Naive thymus-derived CD4-positive, alpha-beta T cell (primary cell): ENCODE measurements at regions of chr7 and their contacts with region 1.

Region 1: DNA sequence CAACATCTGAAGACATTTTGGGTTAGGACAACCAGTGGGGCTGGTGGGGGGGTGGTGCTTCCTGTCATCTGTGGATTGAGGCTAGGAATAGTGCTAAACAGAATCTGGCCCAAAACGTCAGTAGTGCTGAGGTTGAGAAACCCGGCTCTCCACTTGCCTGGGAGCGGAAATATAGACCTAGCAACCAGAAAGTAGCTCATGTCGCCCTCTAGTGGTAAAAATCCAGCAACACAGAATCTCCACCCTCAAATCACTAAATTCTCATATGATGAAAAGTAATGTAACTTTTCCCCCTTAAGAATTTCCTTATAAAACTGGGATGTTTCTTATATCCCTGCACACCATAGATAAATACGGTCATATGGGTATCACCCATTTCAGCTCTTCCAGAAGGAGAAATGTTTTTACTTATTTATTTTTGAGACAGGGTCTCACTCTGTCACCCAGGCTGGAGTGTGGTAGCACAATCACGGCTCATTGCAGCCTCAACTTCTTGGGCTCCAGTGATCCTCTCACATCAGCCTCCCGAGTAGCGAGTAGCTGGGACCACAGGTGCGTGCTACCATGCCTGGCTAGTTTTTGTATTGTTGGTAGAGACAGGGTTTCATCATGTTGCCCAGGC is 34.4 kb downstream of the ZC3HAV1 start:
- DNase-seq: peak; percentile 20 to 82 (median 76)
- ATAC-seq: peak; percentile 91
- H3K4me3 ChIP-seq: no peak overlapping the region
- H3K4me3 Mint-ChIP-seq: peak overlapping the region in 9 of 10 donors; percentile 45 to 77 (median 65)
- H3K27ac ChIP-seq: peak overlapping the region; percentile 64
- H3K27ac Mint-ChIP-seq: peak overlapping the region; percentile 73 to 92 (median 84)
- H3K4me1 ChIP-seq: peaks cover 16 to 55% of the 10 kb centered on the region in 2 donors
- H3K4me1 Mint-ChIP-seq: peaks cover 37 to 81% (median 73%) of the 10 kb centered on the region in 7 donors
- H3K27me3 ChIP-seq: no peaks in the 10 kb centered on the region
- H3K27me3 Mint-ChIP-seq: no peaks in the 10 kb centered on the region

Region 2: DNA sequence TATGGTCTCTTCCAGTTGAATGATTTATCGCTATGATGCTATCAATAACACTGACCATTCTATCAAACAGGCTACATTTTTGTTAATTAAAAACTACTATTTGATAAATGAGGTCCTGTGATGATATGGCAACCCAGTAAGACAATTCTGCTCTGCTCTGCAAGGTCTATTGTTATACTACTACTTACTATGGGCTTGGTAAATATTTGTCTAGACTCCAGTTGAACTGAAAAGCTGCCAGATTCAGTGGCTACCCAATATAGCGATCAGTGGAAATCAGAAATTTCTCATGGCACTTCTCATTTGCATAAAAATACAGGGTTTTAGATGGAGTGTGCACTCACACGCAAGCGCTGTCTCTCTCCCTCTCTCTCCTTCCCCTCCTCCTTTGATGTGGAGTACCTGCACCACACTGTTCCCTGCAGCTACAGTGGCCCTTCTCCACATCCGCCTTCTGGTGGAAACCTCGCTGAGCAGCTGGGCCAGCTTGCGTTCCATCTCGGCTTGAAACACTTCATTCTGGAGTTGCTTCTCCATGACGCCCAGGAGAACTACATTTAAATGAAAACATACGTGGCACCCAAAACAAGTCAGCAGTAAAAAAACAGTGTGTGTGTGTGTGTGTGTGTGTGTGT is 171.8 kb before region 1 on chr7:
- CTCF ChIA-PET with region 1: no interaction called
- POLR2A ChIA-PET with region 1: interaction called, 6 read pairs
- intact Hi-C with region 1: loop called in 1 of 2 experiments (anchors 1 kb)
- DNase-seq: peak; percentile 29 to 94 (median 90)
- ATAC-seq: peak; percentile 98
- H3K4me3 ChIP-seq: peak overlapping the region; percentile 38
- H3K4me3 Mint-ChIP-seq: peak overlapping the region; percentile 69 to 94 (median 82)
- H3K27ac ChIP-seq: no peak overlapping the region
- H3K27ac Mint-ChIP-seq: peak overlapping the region; percentile 17 to 97 (median 87)
- H3K4me1 ChIP-seq: peaks cover 20 to 36% of the 10 kb centered on the region in 2 donors
- H3K4me1 Mint-ChIP-seq: peaks cover 25 to 66% (median 56%) of the 10 kb centered on the region in 7 donors
- H3K27me3 ChIP-seq: no peaks in the 10 kb centered on the region
- H3K27me3 Mint-ChIP-seq: peaks cover 0 to 59% (median 5%) of the 10 kb centered on the region in 5 donors

Region 3: DNA sequence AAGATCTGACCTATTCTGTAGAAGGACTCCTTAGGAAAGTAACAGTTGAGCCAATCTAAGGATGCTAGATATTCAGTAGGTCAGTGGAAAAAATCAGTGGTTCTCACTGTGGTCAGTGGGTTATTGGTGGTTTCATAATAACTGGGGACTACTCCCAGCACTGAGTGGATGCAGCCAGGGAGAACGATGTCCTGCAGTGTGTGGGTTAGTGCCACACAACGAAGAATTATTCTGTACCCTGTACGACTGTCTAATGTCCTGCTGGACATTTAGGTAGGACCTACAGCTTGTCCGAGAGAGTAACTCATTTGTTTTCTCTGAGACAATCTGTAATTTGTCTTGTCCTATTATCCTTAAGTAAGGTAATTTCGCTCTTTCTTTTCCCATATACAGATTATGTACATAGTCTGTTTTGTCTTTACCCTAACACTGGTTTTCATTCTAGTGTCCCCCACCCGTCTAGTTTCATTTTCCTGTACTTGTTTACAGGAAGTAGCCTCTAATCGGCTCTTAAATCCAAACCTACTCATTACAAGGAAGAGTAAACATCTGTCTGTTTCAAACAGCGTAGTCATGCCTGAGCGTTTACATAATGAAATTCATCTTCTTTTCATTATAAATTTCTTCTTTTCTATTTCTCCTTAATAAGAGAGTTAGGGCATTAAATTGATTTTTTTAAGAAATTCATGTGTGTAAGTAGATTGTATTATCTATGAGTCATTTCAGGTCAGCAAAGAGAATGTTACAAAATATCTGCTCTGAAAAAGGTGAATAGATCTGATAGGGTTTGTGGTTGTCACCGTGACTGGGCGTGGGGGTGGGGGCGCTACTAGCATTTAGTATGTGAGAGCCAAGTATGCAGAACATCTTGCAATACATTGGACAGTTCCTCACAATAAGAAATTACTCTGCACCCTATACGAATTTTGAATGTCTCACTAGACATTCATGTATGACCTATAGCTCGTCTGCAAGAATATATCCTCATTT is 31.0 kb before region 1 on chr7:
- CTCF ChIA-PET with region 1: no interaction called
- POLR2A ChIA-PET with region 1: interaction called, 8 read pairs
- intact Hi-C with region 1: loop called (anchors 1 to 2 kb)
- DNase-seq: peak in 5 of 9 donors; percentile 36 to 71 (median 40)
- ATAC-seq: peak; percentile 81
- H3K4me3 ChIP-seq: no peak overlapping the region
- H3K4me3 Mint-ChIP-seq: peak overlapping the region in 9 of 10 donors; percentile 4 to 87 (median 58)
- H3K27ac ChIP-seq: peak overlapping the region; percentile 50
- H3K27ac Mint-ChIP-seq: peak overlapping the region; percentile 48 to 89 (median 79)
- H3K4me1 ChIP-seq: peaks cover 36 to 38% of the 10 kb centered on the region in 2 donors
- H3K4me1 Mint-ChIP-seq: peaks cover 35 to 77% (median 67%) of the 10 kb centered on the region in 7 donors
- H3K27me3 ChIP-seq: no peaks in the 10 kb centered on the region
- H3K27me3 Mint-ChIP-seq: no peaks in the 10 kb centered on the region

Region 4: GRCh38 chr7:139058943-139059342 is 16.2 kb before region 1 on chr7:
- CTCF ChIA-PET with region 1: interaction called, 4 read pairs
- POLR2A ChIA-PET with region 1: interaction called, 8 read pairs
- intact Hi-C with region 1: loop called (anchors 1 to 2 kb)
- DNase-seq: no peak
- ATAC-seq: no peak
- H3K4me3 ChIP-seq: no peak overlapping the region
- H3K4me3 Mint-ChIP-seq: peak overlapping the region in 1 of 10 donors; percentile 16
- H3K27ac ChIP-seq: peak overlapping the region; percentile 22
- H3K27ac Mint-ChIP-seq: peak overlapping the region in 8 of 9 donors; percentile 38 to 91 (median 79)
- H3K4me1 ChIP-seq: peaks cover 0 to 16% of the 10 kb centered on the region in 2 donors
- H3K4me1 Mint-ChIP-seq: peaks cover 28 to 63% (median 49%) of the 10 kb centered on the region in 7 donors
- H3K27me3 ChIP-seq: no peaks in the 10 kb centered on the region
- H3K27me3 Mint-ChIP-seq: no peaks in the 10 kb centered on the region

Region 5: GRCh38 chr7:139095194-139095659 is 20.1 kb after region 1 on chr7:
- CTCF ChIA-PET with region 1: interaction called, 16 read pairs
- POLR2A ChIA-PET with region 1: interaction called, 40 read pairs
- intact Hi-C with region 1: loop called (anchors 1 to 2 kb)
- DNase-seq: peak; percentile 45 to 95 (median 93)
- ATAC-seq: peak; percentile 96
- H3K4me3 ChIP-seq: peak overlapping the region; percentile 84
- H3K4me3 Mint-ChIP-seq: peak overlapping the region; percentile 81 to 98 (median 88)
- H3K27ac ChIP-seq: peak overlapping the region; percentile 75
- H3K27ac Mint-ChIP-seq: peak overlapping the region; percentile 89 to 97 (median 94)
- H3K4me1 ChIP-seq: peaks cover 53 to 75% of the 10 kb centered on the region in 2 donors
- H3K4me1 Mint-ChIP-seq: peaks cover 60 to 100% (median 87%) of the 10 kb centered on the region in 7 donors
- H3K27me3 ChIP-seq: no peaks in the 10 kb centered on the region
- H3K27me3 Mint-ChIP-seq: peaks cover 0 to 3% (median 0%) of the 10 kb centered on the region in 5 donors

Region 6: DNA sequence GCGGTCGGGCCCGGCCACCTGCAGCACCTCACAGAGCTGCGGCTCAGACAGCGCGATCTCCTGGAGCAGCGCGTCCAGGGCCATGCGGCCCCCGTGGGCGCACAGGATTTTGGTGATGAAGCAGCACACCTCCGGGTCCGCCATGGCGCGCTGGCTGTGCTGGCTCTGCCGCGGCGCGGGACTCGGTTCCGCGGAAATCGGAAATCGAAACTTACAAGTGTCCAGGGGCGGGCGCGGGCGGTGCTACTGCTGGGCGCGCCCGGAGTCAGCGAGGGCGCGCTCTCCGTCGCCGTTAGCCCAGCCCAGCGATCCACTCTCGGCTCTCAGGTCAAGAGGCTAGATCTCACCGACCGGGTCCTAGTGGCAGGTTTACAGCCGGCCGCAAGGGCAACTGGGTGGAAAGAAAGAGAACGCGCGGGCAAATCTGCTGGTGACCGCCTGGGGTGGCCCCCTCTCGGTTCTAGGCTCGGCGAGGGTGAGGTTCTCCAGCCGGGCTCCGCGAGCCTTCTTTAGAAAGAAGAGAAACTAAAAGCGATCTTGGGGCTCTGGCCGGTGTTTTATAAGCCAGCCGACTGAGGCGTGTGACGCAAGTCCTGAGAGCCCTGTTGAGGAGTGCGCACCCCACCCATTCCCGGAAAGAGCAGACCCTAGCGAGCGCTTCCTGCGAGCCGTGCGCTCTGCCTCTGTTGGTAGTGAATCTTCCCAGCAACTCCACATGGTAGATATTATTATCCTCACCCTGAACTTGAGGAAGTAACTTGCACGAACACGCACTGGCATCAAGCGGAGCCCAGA is 34.2 kb after region 1 on chr7 and contains the start of gene ZC3HAV1:
- CTCF ChIA-PET with region 1: interaction called, 8 read pairs
- POLR2A ChIA-PET with region 1: interaction called, 40 read pairs
- intact Hi-C with region 1: loop called (anchors 1 kb)
- DNase-seq: peak; percentile 68 to 94 (median 90)
- ATAC-seq: peak; percentile 91
- H3K4me3 ChIP-seq: peak within 1 kb of the TSS; percentile 80
- H3K4me3 Mint-ChIP-seq: peak within 1 kb of the TSS; percentile 92 to 100 (median 98)
- H3K27ac ChIP-seq: peak within 1 kb of the TSS; percentile 93
- H3K27ac Mint-ChIP-seq: peak within 1 kb of the TSS; percentile 96 to 100 (median 98)
- H3K4me1 ChIP-seq: peaks cover 13 to 22% of the 10 kb centered on the region in 2 donors
- H3K4me1 Mint-ChIP-seq: peaks cover 24 to 49% (median 42%) of the 10 kb centered on the region in 7 donors
- H3K27me3 ChIP-seq: no peaks in the 10 kb centered on the region
- H3K27me3 Mint-ChIP-seq: no peaks in the 10 kb centered on the region
- total RNA-seq, gene ZC3HAV1: 129 to 181 (median 152) TPM

Region 7: DNA sequence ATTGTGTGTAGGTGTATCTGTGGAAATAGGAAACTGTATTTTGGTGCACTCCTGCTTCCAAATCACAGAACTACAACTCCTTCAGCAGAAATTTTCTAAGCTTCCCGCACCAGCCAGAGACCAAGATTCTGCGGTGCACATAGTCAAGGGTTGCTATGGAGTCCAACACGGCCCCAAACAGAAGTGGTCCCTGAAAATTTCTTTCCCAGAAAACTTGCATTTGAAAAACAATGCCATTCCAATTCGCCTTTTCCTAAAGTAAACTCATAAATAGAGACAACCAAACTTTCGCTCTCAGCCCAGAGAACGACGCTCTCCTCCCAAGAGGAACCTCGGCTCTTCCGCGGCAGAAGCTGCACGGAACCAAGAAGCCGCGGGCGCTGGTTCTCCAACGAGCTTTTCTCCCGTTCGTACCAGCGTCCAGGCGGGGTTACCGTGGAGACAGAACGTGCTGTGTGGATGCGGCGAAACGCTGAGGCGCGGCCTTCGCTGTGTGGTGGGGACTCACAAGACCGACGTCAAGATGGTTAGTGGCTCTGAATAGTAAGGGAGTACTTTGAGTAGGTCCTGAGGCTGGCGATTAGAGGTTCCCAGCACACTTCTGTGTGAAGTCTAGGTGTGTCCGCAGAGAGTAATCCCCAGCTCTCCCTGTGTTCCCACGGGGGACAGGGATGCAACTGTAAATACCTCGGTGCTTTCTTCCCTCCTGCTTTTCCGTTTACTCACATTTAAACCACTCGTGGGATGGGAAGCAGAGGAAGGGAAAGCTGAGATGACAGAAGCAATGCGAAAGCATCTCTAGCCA is 58.4 kb after region 1 on chr7:
- CTCF ChIA-PET with region 1: interaction called, 18 read pairs
- POLR2A ChIA-PET with region 1: interaction called, 8 read pairs
- intact Hi-C with region 1: loop called in 1 of 2 experiments (anchors 2 kb)
- DNase-seq: peak; percentile 68 to 86 (median 83)
- ATAC-seq: peak; percentile 98
- H3K4me3 ChIP-seq: peak overlapping the region; percentile 86
- H3K4me3 Mint-ChIP-seq: peak overlapping the region; percentile 85 to 96 (median 90)
- H3K27ac ChIP-seq: peak overlapping the region; percentile 72
- H3K27ac Mint-ChIP-seq: peak overlapping the region; percentile 76 to 95 (median 85)
- H3K4me1 ChIP-seq: peaks cover 0 to 10% of the 10 kb centered on the region in 2 donors
- H3K4me1 Mint-ChIP-seq: peaks cover 11 to 33% (median 16%) of the 10 kb centered on the region in 7 donors
- H3K27me3 ChIP-seq: no peaks in the 10 kb centered on the region
- H3K27me3 Mint-ChIP-seq: peaks cover 0 to 5% (median 0%) of the 10 kb centered on the region in 5 donors

Region 8: DNA sequence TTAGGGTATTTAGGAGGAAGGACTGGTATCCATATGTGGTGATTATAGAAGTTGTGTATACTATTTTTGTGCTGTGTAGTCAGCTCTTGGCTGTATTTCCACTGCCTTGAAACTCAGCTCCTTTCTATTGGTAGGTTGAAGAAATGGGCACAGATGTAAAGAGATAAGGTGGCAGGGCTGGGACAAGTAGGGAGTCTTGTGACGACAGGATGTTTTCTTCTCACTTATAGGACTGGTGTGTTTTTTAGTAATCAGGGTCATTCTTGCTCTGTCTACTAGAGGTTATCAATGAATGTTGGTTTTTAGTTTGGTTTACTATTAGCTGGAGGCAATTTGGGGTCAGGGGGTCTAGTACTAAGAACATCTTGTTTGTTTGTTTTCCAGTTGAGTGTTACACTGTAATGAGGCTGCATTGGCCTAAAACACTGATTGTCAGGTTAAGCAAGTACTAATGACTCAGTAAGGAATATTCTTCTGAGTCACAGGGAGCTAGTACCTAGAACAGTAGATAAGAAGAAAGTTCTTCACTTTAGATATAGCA is 167.7 kb after region 1 on chr7:
- CTCF ChIA-PET with region 1: no interaction called
- POLR2A ChIA-PET with region 1: no interaction called
- intact Hi-C with region 1: no loop called
- DNase-seq: no peak
- ATAC-seq: no peak
- H3K4me3 ChIP-seq: no peak overlapping the region
- H3K4me3 Mint-ChIP-seq: no peak overlapping the region
- H3K27ac ChIP-seq: no peak overlapping the region
- H3K27ac Mint-ChIP-seq: peak overlapping the region in 1 of 9 donors; percentile 74
- H3K4me1 ChIP-seq: no peaks in the 10 kb centered on the region
- H3K4me1 Mint-ChIP-seq: peaks cover 9 to 15% (median 11%) of the 10 kb centered on the region in 7 donors
- H3K27me3 ChIP-seq: no peaks in the 10 kb centered on the region
- H3K27me3 Mint-ChIP-seq: no peaks in the 10 kb centered on the region